Testis (tissue), 5 donors: ENCODE measurements at regions of chr1 and their contacts with region 1.

Region 1: DNA sequence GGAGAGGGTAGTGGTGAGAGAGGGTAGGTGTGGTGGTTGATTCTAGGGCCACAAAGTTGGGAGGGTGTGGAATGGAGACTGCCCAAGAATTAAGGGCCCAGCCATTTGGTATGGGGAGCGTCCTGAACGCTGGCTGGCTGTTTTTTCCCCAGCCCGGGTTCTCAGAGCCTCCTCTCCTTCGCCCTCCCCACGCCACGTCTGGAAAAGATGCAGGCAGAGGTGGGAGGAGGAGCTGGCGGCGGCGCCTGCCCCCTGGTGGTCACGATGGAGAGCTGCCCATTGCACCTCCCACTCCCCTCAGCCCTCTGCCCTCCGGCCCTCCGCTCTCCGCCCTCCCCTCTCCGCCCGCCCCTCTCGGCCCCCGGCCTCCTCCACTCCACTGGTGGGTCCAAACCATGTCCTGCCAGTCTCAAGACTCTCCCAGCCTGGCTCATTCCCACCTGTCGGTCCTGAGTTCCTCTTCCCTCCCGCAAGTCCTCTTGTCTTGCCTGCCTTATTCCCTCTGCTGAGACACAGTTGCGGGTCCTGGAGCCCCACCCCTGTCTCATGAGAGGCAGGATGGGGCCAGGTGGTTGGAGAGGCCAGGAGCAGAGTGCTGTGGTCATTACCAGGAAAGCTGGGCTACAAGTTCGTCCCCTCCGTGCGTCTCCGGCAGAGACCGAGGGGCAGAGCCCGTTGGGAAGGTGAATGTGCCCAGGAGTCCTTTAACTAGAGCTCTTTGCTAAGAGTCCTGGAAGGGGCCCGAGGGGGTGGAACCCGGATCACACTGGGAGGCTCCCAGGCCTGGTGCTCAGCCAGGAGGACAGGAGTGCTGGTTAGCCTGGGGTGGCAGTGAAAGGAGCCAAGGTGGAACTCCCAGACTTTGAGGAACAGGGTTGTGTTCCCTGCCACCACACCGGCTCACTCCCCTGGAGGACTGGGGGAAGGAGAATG is 22.6 kb downstream of the ETNK2 start:
- DNase-seq: peak; percentile 80
- H3K4me3 ChIP-seq: peak overlapping the region in 1 of 2 donors; percentile 46
- H3K27ac ChIP-seq: peak overlapping the region; percentile 10 to 78
- H3K4me1 ChIP-seq: peaks cover 54% of the 10 kb centered on the region
- H3K27me3 ChIP-seq: no peaks in the 10 kb centered on the region
- CTCF ChIP-seq: peak; percentile 74 to 93 (median 92)
- POLR2A ChIP-seq: no peak

Region 2: GRCh38 chr1:203871107-203871875 is 257.9 kb before region 1 on chr1:
- intact Hi-C with region 1: loop called (anchors 5 kb)
- DNase-seq: peak; percentile 71
- H3K4me3 ChIP-seq: no peak overlapping the region
- H3K27ac ChIP-seq: peak overlapping the region; percentile 39 to 68
- H3K4me1 ChIP-seq: peaks cover 18% of the 10 kb centered on the region
- H3K27me3 ChIP-seq: no peaks in the 10 kb centered on the region
- CTCF ChIP-seq: peak; percentile 76 to 99 (median 99)
- POLR2A ChIP-seq: no peak

Region 3: GRCh38 chr1:204003529-204003928 is 125.7 kb before region 1 on chr1:
- intact Hi-C with region 1: no loop called
- DNase-seq: no peak
- H3K4me3 ChIP-seq: no peak overlapping the region
- H3K27ac ChIP-seq: no peak overlapping the region
- H3K4me1 ChIP-seq: no peaks in the 10 kb centered on the region
- H3K27me3 ChIP-seq: no peaks in the 10 kb centered on the region
- CTCF ChIP-seq: no peak
- POLR2A ChIP-seq: no peak

Region 4: GRCh38 chr1:204072931-204073836 is 56.0 kb before region 1 on chr1 and contains the start of gene SOX13:
- intact Hi-C with region 1: loop called (anchors 10 kb)
- DNase-seq: peak; percentile 94
- H3K4me3 ChIP-seq: peak within 1 kb of the TSS; percentile 67 to 77
- H3K27ac ChIP-seq: peak within 1 kb of the TSS; percentile 84 to 87
- H3K4me1 ChIP-seq: peaks cover 19% of the 10 kb centered on the region
- H3K27me3 ChIP-seq: no peaks in the 10 kb centered on the region
- CTCF ChIP-seq: no peak
- POLR2A ChIP-seq: peak; percentile 49
- total RNA-seq, gene SOX13: 29.1 to 33.4 TPM

Region 5: GRCh38 chr1:204453141-204453772 is 324.0 kb after region 1 on chr1:
- intact Hi-C with region 1: no loop called
- DNase-seq: no peak
- H3K4me3 ChIP-seq: no peak overlapping the region
- H3K27ac ChIP-seq: no peak overlapping the region
- H3K4me1 ChIP-seq: no peaks in the 10 kb centered on the region
- H3K27me3 ChIP-seq: no peaks in the 10 kb centered on the region
- CTCF ChIP-seq: no peak
- POLR2A ChIP-seq: no peak

Region 6: GRCh38 chr1:204723131-204723787 is 594.0 kb after region 1 on chr1:
- intact Hi-C with region 1: no loop called
- DNase-seq: no peak
- H3K4me3 ChIP-seq: no peak overlapping the region
- H3K27ac ChIP-seq: no peak overlapping the region
- H3K4me1 ChIP-seq: no peaks in the 10 kb centered on the region
- H3K27me3 ChIP-seq: no peaks in the 10 kb centered on the region
- CTCF ChIP-seq: no peak
- POLR2A ChIP-seq: no peak